ENCODE measurements at regions of chr1 and their contacts with region 1.

Region 1: GRCh38 chr1:19010995-19011844 is 54.7 kb upstream of the IFFO2 start:
- DNase-seq: peak; percentile 86
- H3K4me3 ChIP-seq: no peak overlapping the region
- H3K27ac ChIP-seq: peak overlapping the region; percentile 78 to 86
- H3K4me1 ChIP-seq: peaks cover 20% of the 10 kb centered on the region
- H3K27me3 ChIP-seq: no peaks in the 10 kb centered on the region
- CTCF ChIP-seq: no peak
- POLR2A ChIP-seq: peak; percentile 43

Region 2: DNA sequence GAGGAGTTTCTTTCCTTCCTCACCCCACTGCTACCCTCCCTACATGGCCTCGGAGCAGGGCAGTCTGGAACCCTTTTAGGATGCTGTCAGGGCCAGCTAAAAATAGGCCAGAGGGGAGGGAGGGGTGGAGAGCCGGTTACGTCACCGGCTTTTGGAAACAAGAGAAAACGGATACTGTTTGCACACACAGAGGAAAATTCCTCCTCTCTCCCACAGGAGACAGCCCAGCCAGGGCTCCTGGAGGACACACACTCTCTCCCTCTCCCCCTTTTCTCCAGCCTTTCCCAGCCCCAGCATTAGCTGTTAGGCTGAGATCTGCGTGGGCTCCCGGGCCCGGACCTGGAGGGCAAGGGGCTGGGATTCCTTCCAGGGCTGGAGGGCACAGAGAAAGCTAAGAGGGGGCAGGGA is 88.9 kb before region 1 on chr1:
- intact Hi-C with region 1: loop called (anchors 5 kb)
- DNase-seq: peak; percentile 79
- H3K4me3 ChIP-seq: no peak overlapping the region
- H3K27ac ChIP-seq: peak overlapping the region; percentile 80 to 84
- H3K4me1 ChIP-seq: peaks cover 22% of the 10 kb centered on the region
- H3K27me3 ChIP-seq: no peaks in the 10 kb centered on the region
- CTCF ChIP-seq: peak in 2 of 4 experiments; percentile 21 to 37
- POLR2A ChIP-seq: peak; percentile 59

Region 3: DNA sequence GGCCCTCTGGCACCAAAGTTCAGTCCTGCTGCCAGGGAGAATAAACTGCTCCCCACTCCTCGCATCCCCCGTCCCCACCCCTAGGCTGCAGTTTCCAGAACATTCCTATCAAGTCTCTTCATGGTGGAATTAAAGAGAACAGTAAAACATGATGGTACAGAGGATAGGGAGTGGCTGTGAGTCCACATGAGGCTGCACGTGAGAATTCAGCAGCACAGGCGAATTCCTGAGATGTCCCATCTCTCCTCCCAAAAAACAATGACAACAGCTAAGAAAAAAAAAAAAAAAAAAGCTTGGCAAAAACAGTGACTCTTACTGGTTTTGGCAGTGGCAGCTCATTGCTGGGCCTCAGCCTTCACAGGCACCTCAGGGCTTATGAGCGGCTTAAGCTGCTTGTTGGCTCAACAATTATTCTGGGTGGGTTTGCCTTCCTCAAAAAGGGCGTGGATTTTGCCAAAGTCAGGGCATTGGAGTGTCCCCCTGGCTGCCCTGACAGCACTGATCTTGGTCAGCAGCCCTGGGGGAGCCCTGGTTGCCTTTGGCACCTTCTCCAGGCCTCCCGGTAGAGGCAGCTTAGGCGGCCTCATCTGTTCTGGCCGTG is 49.0 kb before region 1 on chr1:
- intact Hi-C with region 1: loop called (anchors 5 kb)
- DNase-seq: peak; percentile 85
- H3K4me3 ChIP-seq: no peak overlapping the region
- H3K27ac ChIP-seq: peak overlapping the region; percentile 58 to 85
- H3K4me1 ChIP-seq: no peaks in the 10 kb centered on the region
- H3K27me3 ChIP-seq: no peaks in the 10 kb centered on the region
- CTCF ChIP-seq: no peak
- POLR2A ChIP-seq: no peak

Region 4: GRCh38 chr1:19074902-19075721 is 63.9 kb after region 1 on chr1:
- intact Hi-C with region 1: loop called (anchors 5 kb)
- DNase-seq: peak; percentile 83
- H3K4me3 ChIP-seq: no peak overlapping the region
- H3K27ac ChIP-seq: peak overlapping the region; percentile 72 to 81
- H3K4me1 ChIP-seq: peaks cover 65% of the 10 kb centered on the region
- H3K27me3 ChIP-seq: no peaks in the 10 kb centered on the region
- CTCF ChIP-seq: no peak
- POLR2A ChIP-seq: peak; percentile 53

Region 5: GRCh38 chr1:19096036-19096833 is 85.0 kb after region 1 on chr1:
- intact Hi-C with region 1: loop called (anchors 5 kb)
- DNase-seq: peak; percentile 77
- H3K4me3 ChIP-seq: no peak overlapping the region
- H3K27ac ChIP-seq: no peak overlapping the region
- H3K4me1 ChIP-seq: no peaks in the 10 kb centered on the region
- H3K27me3 ChIP-seq: no peaks in the 10 kb centered on the region
- CTCF ChIP-seq: peak; percentile 29 to 86 (median 68)
- POLR2A ChIP-seq: no peak

Measured in prostate gland (tissue), 2 donors.